GM12878 (cell line): ENCODE measurements at regions of chr11 and their contacts with region 1.

Region 1: DNA sequence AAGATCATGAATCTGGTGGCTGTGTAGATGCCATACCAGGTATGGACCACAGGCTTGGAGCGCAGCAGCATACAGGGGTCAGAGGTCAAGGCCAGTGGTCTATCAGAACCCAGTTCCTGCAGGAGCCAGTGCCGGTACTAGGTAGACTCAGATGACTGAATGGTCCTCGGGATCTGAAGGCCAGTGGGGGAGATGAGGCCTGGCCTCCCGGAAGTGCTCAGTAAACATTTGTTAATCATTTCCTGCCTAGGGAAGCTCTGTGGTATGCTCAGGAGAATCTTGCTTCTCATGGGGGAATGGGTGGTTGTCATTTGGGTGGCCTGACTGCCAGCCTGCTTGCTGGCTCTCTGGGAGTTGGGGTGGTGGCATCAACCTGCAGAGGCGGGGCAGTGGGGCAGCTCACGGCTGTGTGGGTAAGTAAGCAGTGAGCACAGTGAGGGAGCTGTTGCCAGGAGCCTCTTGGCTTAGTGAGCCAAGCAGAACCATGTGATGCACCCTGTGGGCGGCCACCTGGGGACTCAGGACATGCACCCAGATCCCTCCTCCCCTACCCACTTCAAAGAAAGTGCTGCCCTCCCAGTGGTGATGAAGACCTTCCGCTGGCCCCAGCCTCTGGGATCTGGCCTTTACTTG is 33.0 kb downstream of the PTPRJ start:
- DNase-seq: no peak
- ATAC-seq: peak; percentile 68
- H3K4me3 ChIP-seq: no peak overlapping the region
- H3K27ac ChIP-seq: peak overlapping the region; percentile 39
- H3K4me1 ChIP-seq: peaks cover 74% of the 10 kb centered on the region
- H3K27me3 ChIP-seq: no peaks in the 10 kb centered on the region
- CTCF ChIP-seq: no peak
- EP300 ChIP-seq: no peak
- POLR2A ChIP-seq: peak; percentile 58
- RAD21 ChIP-seq: no peak

Region 2: DNA sequence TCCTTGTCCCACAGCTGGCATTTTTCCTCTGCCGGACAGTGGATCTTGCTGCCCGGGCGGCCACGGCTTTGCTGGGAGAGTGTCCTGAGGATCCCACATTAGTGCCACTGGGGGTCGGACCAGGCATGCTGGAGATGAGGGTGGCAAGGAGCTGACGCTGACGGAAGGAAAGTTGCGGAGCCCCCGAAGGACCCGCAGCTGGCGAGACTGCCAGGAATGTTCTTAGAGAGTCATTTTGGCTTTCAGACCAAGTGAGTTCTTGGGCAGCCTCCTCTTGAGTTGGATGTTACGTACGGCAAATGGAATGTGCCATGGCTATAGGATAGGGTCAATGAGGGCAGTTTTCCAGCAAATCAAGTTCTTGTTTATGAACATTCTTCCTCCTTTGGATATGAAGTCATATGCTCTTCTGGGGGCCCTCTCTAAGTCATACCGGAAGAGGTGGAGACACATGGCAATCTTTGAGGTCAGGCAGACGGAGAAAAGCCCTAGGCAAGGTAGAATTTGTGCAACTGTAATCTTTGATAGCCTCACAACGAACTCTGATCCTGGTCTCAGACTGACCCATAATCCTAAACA is 107.8 kb before region 1 on chr11:
- CTCF ChIA-PET with region 1: no interaction called
- POLR2A ChIA-PET with region 1: no interaction called
- RAD21 ChIA-PET with region 1: no interaction called
- SMC1A ChIA-PET with region 1: no interaction called
- in situ Hi-C with region 1: no loop called
- intact Hi-C with region 1: no loop called
- DNase-seq: no peak
- ATAC-seq: no peak
- H3K4me3 ChIP-seq: no peak overlapping the region
- H3K27ac ChIP-seq: no peak overlapping the region
- H3K4me1 ChIP-seq: peaks cover 6% of the 10 kb centered on the region
- H3K27me3 ChIP-seq: no peaks in the 10 kb centered on the region
- CTCF ChIP-seq: no peak
- EP300 ChIP-seq: no peak
- POLR2A ChIP-seq: no peak
- RAD21 ChIP-seq: no peak

Region 3: GRCh38 chr11:47980245-47981049 is 32.9 kb before region 1 on chr11 and contains the start of gene PTPRJ:
- CTCF ChIA-PET with region 1: interaction called, 5 read pairs
- POLR2A ChIA-PET with region 1: interaction called, 4 read pairs
- RAD21 ChIA-PET with region 1: interaction called, 3 read pairs
- SMC1A ChIA-PET with region 1: interaction called, 14 read pairs
- in situ Hi-C with region 1: no loop called
- intact Hi-C with region 1: no loop called
- DNase-seq: no peak
- ATAC-seq: peak; percentile 75
- H3K4me3 ChIP-seq: peak within 1 kb of the TSS; percentile 96
- H3K27ac ChIP-seq: peak within 1 kb of the TSS; percentile 68
- H3K4me1 ChIP-seq: peaks cover 14% of the 10 kb centered on the region
- H3K27me3 ChIP-seq: peaks cover 0 to 3% of the 10 kb centered on the region in 2 experiments; a peak in 2 of 4 replicates
- CTCF ChIP-seq: no peak
- EP300 ChIP-seq: no peak
- POLR2A ChIP-seq: no peak; the same call in 1 of the 2 replicates
- RAD21 ChIP-seq: no peak
- polyA plus RNA-seq, gene PTPRJ: 0.77 to 0.91 TPM